WTC11 (cell line): ENCODE measurements at regions of chr15 and their contacts with region 1.

Region 1: DNA sequence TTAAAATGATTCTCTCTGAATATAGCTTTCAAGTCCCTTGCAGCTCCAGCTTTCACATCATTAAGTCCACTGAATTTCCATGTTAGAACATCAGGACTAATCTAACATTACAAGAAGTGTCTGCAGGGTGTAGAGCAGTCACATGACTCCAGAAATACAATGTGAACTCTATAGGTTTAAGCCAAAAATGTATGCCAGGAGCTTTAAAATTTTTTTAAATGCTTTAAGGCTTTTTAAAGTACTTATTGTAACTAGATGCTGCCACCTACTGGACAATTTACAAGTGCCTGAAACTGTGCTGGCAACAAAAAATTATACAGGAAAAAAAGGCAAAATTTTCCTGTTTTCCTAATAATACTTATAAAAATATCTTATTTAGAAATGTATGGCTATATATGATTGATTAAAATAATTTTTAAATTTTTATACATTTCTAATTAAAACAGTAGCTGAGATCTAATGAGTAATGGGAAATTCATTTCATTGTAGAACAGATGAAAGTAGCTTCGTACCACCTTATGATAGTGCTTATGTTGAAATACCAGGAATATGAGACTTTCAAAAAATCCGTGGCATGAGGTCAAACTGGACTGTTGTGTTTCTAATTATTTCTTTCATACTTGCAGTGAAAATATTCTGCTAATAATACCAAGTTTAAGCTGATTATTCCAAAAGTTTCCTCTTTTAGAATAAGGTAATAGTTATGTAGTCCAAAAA is 25.7 kb downstream of the FSIP1 start:
- DNase-seq: no peak
- ATAC-seq: no peak
- H3K4me3 Mint-ChIP-seq: no peak overlapping the region
- H3K27ac Mint-ChIP-seq: no peak overlapping the region
- H3K4me1 Mint-ChIP-seq: no peaks in the 10 kb centered on the region
- H3K27me3 Mint-ChIP-seq: no peaks in the 10 kb centered on the region
- CTCF ChIP-seq: peak; percentile 53

Region 2: GRCh38 chr15:39629371-39629770 is 127.6 kb before region 1 on chr15:
- CTCF ChIA-PET with region 1: interaction called, 33 read pairs
- POLR2A ChIA-PET with region 1: no interaction called
- DNase-seq: no peak
- ATAC-seq: no peak
- H3K4me3 Mint-ChIP-seq: no peak overlapping the region
- H3K27ac Mint-ChIP-seq: no peak overlapping the region
- H3K4me1 Mint-ChIP-seq: no peaks in the 10 kb centered on the region
- H3K27me3 Mint-ChIP-seq: no peaks in the 10 kb centered on the region
- CTCF ChIP-seq: no peak

Region 3: DNA sequence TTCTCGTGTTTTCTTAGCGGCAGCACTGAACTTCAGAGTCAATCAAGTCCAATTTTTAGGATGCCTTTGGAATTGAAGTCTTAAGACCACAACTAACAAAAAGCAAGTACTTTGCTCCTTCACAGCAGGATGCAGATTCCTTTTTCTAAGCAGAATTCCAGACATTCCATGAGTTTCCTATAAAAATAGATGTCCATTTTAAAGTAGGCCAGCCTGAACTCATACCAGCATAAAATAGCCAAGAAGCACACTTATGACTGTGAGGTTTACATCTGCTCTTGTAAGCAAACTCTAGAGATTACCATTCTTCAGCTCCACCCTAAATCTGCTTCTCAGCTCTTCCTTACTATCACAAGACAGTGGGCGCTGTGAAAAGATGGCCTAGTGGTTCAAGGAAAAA is 90.3 kb before region 1 on chr15:
- CTCF ChIA-PET with region 1: interaction called, 26 read pairs
- POLR2A ChIA-PET with region 1: no interaction called
- DNase-seq: no peak
- ATAC-seq: peak; percentile 35
- H3K4me3 Mint-ChIP-seq: no peak overlapping the region
- H3K27ac Mint-ChIP-seq: peak overlapping the region; percentile 85; the same call in 1 of the 2 replicates
- H3K4me1 Mint-ChIP-seq: peaks cover 49% of the 10 kb centered on the region
- H3K27me3 Mint-ChIP-seq: no peaks in the 10 kb centered on the region
- CTCF ChIP-seq: no peak

Region 4: GRCh38 chr15:39692356-39693327 is 64.3 kb before region 1 on chr15:
- CTCF ChIA-PET with region 1: interaction called, 53 read pairs
- POLR2A ChIA-PET with region 1: no interaction called
- DNase-seq: peak; percentile 29
- ATAC-seq: peak; percentile 93
- H3K4me3 Mint-ChIP-seq: peak overlapping the region; percentile 3
- H3K27ac Mint-ChIP-seq: no peak overlapping the region
- H3K4me1 Mint-ChIP-seq: peaks cover 21% of the 10 kb centered on the region
- H3K27me3 Mint-ChIP-seq: no peaks in the 10 kb centered on the region
- CTCF ChIP-seq: no peak

Region 5: DNA sequence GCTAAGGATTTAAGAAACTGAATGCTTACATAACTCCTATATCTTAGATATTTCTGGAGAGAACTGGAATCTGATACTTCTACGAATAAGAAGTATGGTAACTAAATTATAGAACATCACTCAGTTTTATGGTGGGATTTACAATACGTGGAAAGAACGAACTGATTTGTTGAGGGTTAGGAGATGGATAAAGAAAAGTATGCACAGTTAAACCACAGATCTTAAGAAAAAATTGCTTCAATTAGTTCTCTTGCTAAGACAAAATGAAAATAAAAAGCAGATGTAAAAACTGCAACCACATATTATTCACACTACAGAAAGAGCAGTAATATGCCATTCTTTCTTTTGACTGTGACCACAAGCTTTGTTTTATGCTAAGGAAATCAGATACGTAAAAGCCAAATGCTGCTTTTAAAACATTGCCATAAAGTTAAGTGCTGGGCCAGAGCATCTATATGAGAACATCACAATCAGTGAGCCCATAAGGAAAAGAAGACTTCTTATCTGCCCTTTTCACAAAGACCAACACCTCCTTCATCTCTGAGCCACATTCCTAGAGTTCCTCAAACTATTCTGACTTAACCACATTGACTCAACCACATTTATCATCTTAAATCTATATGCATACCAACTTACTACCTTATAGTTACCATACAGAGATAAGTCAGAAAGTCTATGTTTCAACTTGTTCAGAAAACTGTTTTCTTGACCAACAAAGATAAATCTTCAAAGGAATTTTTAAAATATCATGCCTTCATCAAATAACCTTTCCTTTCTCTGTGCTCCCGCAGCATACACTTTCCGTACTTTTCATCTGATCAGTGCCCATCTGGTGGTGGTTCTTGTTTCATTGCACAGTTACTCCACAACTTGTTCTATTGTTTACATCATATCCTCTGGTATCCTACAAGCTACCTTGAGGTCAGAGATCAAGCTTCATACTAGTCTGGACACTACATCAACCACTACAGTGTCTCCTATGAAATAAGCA is 36.0 kb before region 1 on chr15:
- CTCF ChIA-PET with region 1: interaction called, 21 read pairs
- POLR2A ChIA-PET with region 1: no interaction called
- DNase-seq: no peak
- ATAC-seq: no peak
- H3K4me3 Mint-ChIP-seq: no peak overlapping the region
- H3K27ac Mint-ChIP-seq: no peak overlapping the region
- H3K4me1 Mint-ChIP-seq: no peaks in the 10 kb centered on the region
- H3K27me3 Mint-ChIP-seq: no peaks in the 10 kb centered on the region
- CTCF ChIP-seq: no peak

Region 6: GRCh38 chr15:39744334-39745103 is 12.4 kb before region 1 on chr15:
- CTCF ChIA-PET with region 1: interaction called, 42 read pairs
- POLR2A ChIA-PET with region 1: no interaction called
- DNase-seq: peak; percentile 19
- ATAC-seq: peak; percentile 92
- H3K4me3 Mint-ChIP-seq: no peak overlapping the region
- H3K27ac Mint-ChIP-seq: no peak overlapping the region
- H3K4me1 Mint-ChIP-seq: peaks cover 12% of the 10 kb centered on the region; the same call in 1 of the 2 replicates
- H3K27me3 Mint-ChIP-seq: no peaks in the 10 kb centered on the region
- CTCF ChIP-seq: no peak

Region 7: DNA sequence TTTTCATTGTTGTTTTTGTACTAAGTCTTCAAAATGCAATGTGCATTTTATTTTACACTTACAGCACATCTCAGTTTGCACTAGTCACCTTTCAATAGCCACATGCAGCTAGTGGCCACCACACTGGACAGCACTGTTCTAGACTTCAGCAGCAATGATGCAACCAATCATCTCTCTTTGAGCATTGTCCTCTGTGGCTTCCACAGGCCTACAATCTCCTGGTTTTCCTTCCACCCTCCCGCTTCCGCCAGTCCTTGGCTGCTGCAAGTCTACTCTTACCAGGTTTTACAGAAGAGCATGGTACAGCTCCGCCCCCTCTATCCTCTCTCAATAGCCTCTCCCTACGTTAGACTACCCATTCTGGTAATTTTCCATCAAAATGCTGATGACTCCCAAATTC is 50.8 kb after region 1 on chr15:
- CTCF ChIA-PET with region 1: no interaction called
- POLR2A ChIA-PET with region 1: no interaction called
- DNase-seq: peak; percentile 39
- ATAC-seq: peak; percentile 85
- H3K4me3 Mint-ChIP-seq: 0 out of 2 replicates have a peak overlapping the region, but pooled peaks have one; percentile 4
- H3K27ac Mint-ChIP-seq: peak overlapping the region; percentile 54
- H3K4me1 Mint-ChIP-seq: peaks cover 46% of the 10 kb centered on the region
- H3K27me3 Mint-ChIP-seq: no peaks in the 10 kb centered on the region
- CTCF ChIP-seq: no peak